Right lobe of liver (tissue), 6 donors: ENCODE measurements at regions of chr18 and their contacts with region 1.

Region 1: DNA sequence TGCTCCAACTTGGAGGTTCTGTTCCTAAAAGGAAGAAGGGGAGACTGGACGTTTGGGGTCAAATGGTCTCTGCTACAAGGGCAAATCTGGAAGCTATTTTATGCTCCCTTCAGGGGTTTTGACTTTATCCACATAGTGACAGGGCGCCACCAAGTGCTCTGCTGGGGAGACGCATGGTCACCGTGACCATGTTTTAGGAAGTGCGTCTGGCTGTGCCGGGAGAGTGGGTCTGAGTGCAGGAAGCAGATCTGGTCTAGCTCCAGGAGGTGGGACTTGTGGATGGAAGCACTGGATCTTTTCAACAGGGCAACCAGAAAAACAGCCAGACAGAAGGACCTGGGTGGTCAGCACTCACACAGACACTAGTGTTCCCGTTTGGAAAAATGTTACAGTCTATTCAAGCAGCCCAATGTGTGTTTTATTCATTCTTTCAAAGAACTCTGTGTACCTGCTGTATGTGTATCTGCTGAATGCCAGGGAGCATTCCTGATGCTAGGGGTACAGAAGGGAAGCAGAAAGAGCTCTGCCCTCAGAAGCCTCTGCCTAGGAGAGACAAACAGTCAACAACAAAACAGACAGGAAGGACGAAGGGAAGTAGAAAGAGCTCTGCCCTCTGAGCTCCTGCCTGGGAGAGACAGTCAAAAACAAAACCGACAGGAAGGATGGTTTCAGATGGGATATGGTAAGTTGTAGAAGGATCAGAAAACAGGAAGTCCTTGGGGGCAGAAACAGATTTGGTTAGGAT is 14.3 kb downstream of the IMPA2 start:
- DNase-seq: peak; percentile 79 to 81 (median 80)
- ATAC-seq: peak; percentile 85 to 92 (median 90)
- H3K4me3 ChIP-seq: no peak overlapping the region
- H3K27ac ChIP-seq: peak overlapping the region; percentile 19 to 29 (median 25)
- H3K4me1 ChIP-seq: peaks cover 0 to 34% (median 10%) of the 10 kb centered on the region in 4 donors
- H3K27me3 ChIP-seq: no peaks in the 10 kb centered on the region
- CTCF ChIP-seq: peak; percentile 80 to 84 (median 84)
- POLR2A ChIP-seq: no peak

Region 2: DNA sequence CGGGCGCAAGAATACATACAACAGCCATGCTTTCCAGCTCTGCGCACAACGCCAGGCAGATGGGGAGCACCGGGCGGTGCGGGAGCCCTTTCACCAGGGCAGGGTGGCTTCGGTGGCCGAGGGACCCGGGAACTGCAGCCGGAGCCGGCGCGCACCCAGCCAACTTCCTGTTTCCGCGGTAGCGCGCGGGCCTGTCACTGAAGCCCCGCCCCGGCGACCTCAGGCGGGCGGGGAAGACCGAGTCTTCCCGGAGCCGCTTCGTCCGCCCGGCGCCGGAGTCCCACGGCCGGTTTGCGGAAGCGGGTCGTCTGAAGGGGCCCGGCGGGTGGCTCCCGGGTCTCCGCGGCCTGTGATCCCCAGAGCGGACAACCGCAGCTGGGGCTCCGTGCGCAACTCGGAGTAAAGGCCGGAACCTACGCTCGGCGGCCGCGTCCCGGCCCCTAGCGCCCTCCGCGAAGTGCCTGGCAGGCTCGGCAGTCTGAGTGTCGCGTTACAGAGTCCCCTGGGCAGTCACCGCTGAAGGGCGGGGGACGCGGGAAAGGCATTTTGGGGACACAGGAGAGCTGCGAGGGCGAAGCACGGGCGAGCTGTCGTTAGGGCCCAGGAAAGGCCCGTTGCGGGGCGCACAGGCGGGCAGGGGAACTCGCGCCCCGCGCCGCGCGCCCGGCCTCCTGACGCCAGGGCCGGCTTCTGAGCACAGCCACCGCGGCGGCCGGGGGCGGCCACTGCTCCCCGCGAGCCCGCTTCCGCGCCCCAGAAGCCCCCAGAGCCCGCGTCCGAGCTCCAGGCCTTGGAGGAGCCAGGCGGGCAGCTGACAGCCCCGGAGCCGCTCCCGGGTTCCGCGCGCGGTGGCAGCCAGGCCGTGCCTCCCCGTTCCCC is 87.2 kb before region 1 on chr18 and contains the start of gene MPPE1:
- intact Hi-C with region 1: no loop called
- DNase-seq: peak; percentile 93 to 95 (median 93)
- ATAC-seq: peak; percentile 87 to 97 (median 94)
- H3K4me3 ChIP-seq: peak within 1 kb of the TSS; percentile 76 to 91 (median 78)
- H3K27ac ChIP-seq: peak within 1 kb of the TSS; percentile 99 to 100 (median 100)
- H3K4me1 ChIP-seq: peaks cover 0 to 26% (median 12%) of the 10 kb centered on the region in 4 donors
- H3K27me3 ChIP-seq: no peaks in the 10 kb centered on the region
- CTCF ChIP-seq: no peak
- POLR2A ChIP-seq: peak; percentile 98
- total RNA-seq, gene MPPE1: 23.2 to 40.9 (median 30.7) TPM

Region 3: GRCh38 chr18:11937874-11938478 is 57.6 kb before region 1 on chr18:
- intact Hi-C with region 1: loop called in 1 of 2 experiments (anchors 10 kb)
- DNase-seq: peak; percentile 72 to 74 (median 73)
- ATAC-seq: peak; percentile 96 to 99 (median 98)
- H3K4me3 ChIP-seq: no peak overlapping the region
- H3K27ac ChIP-seq: no peak overlapping the region
- H3K4me1 ChIP-seq: peaks cover 0 to 6% (median 0%) of the 10 kb centered on the region in 4 donors
- H3K27me3 ChIP-seq: no peaks in the 10 kb centered on the region
- CTCF ChIP-seq: peak; percentile 82 to 88 (median 84)
- POLR2A ChIP-seq: no peak

Region 4: DNA sequence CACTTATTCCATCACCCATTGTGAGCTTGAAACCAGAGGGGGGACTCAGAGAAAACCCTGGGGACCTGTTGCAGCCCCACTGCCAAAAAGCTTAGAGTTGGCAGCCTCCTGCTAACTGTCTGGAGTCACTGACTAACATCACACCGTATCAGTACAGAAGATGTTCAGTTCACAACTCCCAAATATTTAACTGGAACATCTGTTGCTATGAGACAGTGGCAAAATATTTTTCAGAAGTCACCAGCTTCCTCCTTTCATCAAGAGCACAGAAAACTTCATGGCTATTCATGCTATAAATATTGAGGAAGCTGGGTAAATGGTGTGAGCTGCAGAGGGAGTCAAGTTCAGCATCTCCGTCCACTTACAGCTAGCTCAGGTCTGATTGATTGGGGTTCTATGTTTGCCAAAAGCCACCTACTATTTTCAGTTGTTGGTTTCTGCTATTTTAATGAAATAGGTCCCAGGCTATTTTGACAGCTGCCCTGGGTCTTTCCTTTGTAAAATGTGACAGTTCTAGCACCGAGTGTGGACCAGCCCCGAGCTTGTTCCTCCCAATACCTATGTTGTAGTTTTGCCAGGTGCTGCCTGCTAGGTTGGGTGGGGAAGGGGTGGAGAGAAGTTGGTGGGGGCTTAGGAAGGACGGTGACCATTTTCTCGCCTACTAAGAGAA is 322.2 kb after region 1 on chr18:
- intact Hi-C with region 1: no loop called
- DNase-seq: no peak
- ATAC-seq: peak in 2 of 4 donors; percentile 21 to 40
- H3K4me3 ChIP-seq: no peak overlapping the region
- H3K27ac ChIP-seq: no peak overlapping the region
- H3K4me1 ChIP-seq: no peaks in the 10 kb centered on the region
- H3K27me3 ChIP-seq: no peaks in the 10 kb centered on the region
- CTCF ChIP-seq: no peak
- POLR2A ChIP-seq: no peak